ENCODE measurements at regions of chr15 and their contacts with region 1.

Region 1: DNA sequence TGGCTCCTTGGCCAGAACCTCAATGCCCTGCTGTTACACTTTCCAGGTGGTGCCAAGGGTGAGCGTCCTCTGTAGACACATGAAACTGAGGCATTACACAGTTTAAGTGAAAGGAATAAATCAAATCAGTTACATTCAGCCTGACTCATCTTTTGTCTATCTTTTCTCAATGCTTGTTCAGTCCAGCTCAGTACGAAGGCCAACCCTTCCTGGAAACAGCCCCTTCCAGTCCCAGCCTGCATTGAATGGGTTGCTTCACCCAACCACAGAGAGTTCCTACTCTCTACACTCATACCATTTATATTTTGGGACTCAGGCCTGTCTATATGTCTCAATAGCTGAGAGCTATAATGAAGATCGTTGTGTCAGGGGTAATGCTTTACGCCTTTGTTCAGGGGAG is 363.6 kb downstream of the RORA start:
- DNase-seq: no peak
- ATAC-seq: no peak
- H3K4me3 ChIP-seq: no peak overlapping the region
- H3K4me3 Mint-ChIP-seq: no peak overlapping the region
- H3K27ac ChIP-seq: no peak overlapping the region
- H3K27ac Mint-ChIP-seq: no peak overlapping the region
- H3K4me1 ChIP-seq: peaks cover 7% of the 10 kb centered on the region
- H3K4me1 Mint-ChIP-seq: peaks cover 26% of the 10 kb centered on the region
- H3K27me3 ChIP-seq: no peaks in the 10 kb centered on the region
- H3K27me3 Mint-ChIP-seq: no peaks in the 10 kb centered on the region
- CTCF ChIP-seq: no peak

Region 2: DNA sequence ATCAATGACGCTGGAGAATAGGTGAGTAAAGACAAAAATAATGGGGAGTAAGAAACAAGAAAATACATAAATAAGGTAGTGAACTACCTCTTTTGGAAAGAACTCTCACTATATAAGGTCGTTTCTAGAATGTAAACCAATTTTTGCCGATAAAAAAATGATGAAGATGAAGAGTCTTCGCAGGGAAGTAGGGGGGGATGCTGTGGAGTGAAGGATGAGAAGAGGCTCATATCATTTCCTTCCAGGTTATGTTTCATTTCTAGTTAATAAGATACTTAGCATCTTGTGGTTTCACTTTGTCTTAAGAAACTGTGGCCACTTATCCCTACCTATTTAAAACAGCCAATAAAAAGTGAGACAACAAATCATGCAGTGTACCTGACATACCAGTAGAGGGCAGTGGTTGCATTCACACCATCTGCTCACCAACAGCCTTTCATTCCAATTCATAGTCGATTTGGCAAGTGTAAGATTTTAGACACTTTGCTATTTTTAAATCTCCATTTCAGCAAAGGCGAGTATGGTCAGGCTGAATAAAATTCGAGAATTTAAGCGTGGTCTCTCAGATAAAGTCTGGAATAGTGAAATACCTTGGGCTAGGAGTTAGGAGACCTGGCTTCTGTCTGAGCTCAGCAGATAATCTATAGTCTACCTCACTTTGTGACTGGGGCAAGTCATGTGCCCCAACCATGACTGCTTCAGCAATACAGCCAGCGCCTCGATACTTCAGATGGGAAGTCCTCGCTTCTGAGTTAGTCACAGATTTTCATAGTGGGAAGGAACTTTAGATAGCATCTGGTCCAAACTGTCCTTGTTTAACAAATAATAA is 357.7 kb before region 1 on chr15:
- CTCF ChIA-PET with region 1: interaction called, 31 read pairs
- POLR2A ChIA-PET with region 1: no interaction called
- intact Hi-C with region 1: loop called (anchors 1 to 2 kb)
- DNase-seq: peak in 8 of 9 experiments; percentile 18 to 89 (median 52)
- ATAC-seq: peak; percentile 83
- H3K4me3 ChIP-seq: no peak overlapping the region
- H3K4me3 Mint-ChIP-seq: no peak overlapping the region
- H3K27ac ChIP-seq: peak overlapping the region in 1 of 2 experiments; percentile 52
- H3K27ac Mint-ChIP-seq: peak overlapping the region; percentile 47
- H3K4me1 ChIP-seq: peaks cover 33% of the 10 kb centered on the region
- H3K4me1 Mint-ChIP-seq: peaks cover 52% of the 10 kb centered on the region
- H3K27me3 ChIP-seq: no peaks in the 10 kb centered on the region
- H3K27me3 Mint-ChIP-seq: no peaks in the 10 kb centered on the region
- CTCF ChIP-seq: peak; percentile 86

Region 3: GRCh38 chr15:60592371-60593169 is 272.9 kb before region 1 on chr15:
- CTCF ChIA-PET with region 1: interaction called, 71 read pairs
- POLR2A ChIA-PET with region 1: no interaction called
- intact Hi-C with region 1: loop called in 1 of 2 experiments (anchors 2 kb)
- DNase-seq: peak; percentile 71 to 93 (median 87)
- ATAC-seq: peak; percentile 88
- H3K4me3 ChIP-seq: peak overlapping the region; percentile 71 to 81
- H3K4me3 Mint-ChIP-seq: peak overlapping the region; percentile 84
- H3K27ac ChIP-seq: peak overlapping the region; percentile 75 to 83
- H3K27ac Mint-ChIP-seq: peak overlapping the region; percentile 88
- H3K4me1 ChIP-seq: peaks cover 33% of the 10 kb centered on the region
- H3K4me1 Mint-ChIP-seq: peaks cover 35% of the 10 kb centered on the region
- H3K27me3 ChIP-seq: no peaks in the 10 kb centered on the region
- H3K27me3 Mint-ChIP-seq: no peaks in the 10 kb centered on the region
- CTCF ChIP-seq: no peak

Region 4: GRCh38 chr15:60633426-60633968 is 232.0 kb before region 1 on chr15:
- CTCF ChIA-PET with region 1: no interaction called
- POLR2A ChIA-PET with region 1: no interaction called
- intact Hi-C with region 1: no loop called
- DNase-seq: no peak
- ATAC-seq: no peak
- H3K4me3 ChIP-seq: no peak overlapping the region
- H3K4me3 Mint-ChIP-seq: no peak overlapping the region
- H3K27ac ChIP-seq: no peak overlapping the region
- H3K27ac Mint-ChIP-seq: no peak overlapping the region
- H3K4me1 ChIP-seq: no peaks in the 10 kb centered on the region
- H3K4me1 Mint-ChIP-seq: peaks cover 12% of the 10 kb centered on the region
- H3K27me3 ChIP-seq: no peaks in the 10 kb centered on the region
- H3K27me3 Mint-ChIP-seq: no peaks in the 10 kb centered on the region
- CTCF ChIP-seq: no peak

Region 5: DNA sequence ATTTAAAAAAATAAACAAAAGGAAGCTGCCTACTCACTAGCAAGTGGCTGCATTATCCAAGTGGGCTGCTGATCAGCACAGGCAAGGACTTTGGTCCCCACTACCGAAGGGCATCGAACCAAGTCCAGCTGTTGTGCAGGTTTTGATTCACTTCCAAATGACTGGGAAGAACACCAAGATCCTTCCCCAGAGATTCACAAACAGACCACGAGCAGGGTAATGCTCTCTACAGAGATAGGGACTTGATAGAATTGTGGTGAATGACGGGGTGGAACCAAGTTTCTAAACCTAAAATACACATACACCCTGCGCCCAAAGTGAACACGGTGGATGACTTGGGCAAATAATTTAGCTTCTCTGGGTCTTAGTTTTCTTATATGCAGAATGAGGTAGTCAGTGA is 182.9 kb before region 1 on chr15:
- CTCF ChIA-PET with region 1: no interaction called
- POLR2A ChIA-PET with region 1: no interaction called
- intact Hi-C with region 1: no loop called
- DNase-seq: no peak
- ATAC-seq: no peak
- H3K4me3 ChIP-seq: no peak overlapping the region
- H3K4me3 Mint-ChIP-seq: no peak overlapping the region
- H3K27ac ChIP-seq: no peak overlapping the region
- H3K27ac Mint-ChIP-seq: no peak overlapping the region
- H3K4me1 ChIP-seq: no peaks in the 10 kb centered on the region
- H3K4me1 Mint-ChIP-seq: no peaks in the 10 kb centered on the region
- H3K27me3 ChIP-seq: no peaks in the 10 kb centered on the region
- H3K27me3 Mint-ChIP-seq: no peaks in the 10 kb centered on the region
- CTCF ChIP-seq: no peak

Region 6: GRCh38 chr15:60787837-60788691 is 77.4 kb before region 1 on chr15:
- CTCF ChIA-PET with region 1: interaction called, 19 read pairs
- POLR2A ChIA-PET with region 1: no interaction called
- intact Hi-C with region 1: no loop called
- DNase-seq: peak in 6 of 9 experiments; percentile 27 to 53 (median 42)
- ATAC-seq: peak; percentile 76
- H3K4me3 ChIP-seq: no peak overlapping the region
- H3K4me3 Mint-ChIP-seq: peak overlapping the region; percentile 13
- H3K27ac ChIP-seq: no peak overlapping the region
- H3K27ac Mint-ChIP-seq: peak overlapping the region; percentile 74
- H3K4me1 ChIP-seq: peaks cover 5% of the 10 kb centered on the region
- H3K4me1 Mint-ChIP-seq: peaks cover 14% of the 10 kb centered on the region
- H3K27me3 ChIP-seq: no peaks in the 10 kb centered on the region
- H3K27me3 Mint-ChIP-seq: no peaks in the 10 kb centered on the region
- CTCF ChIP-seq: peak; percentile 50

Region 7: GRCh38 chr15:60840306-60840702 is 25.2 kb before region 1 on chr15:
- CTCF ChIA-PET with region 1: interaction called, 19 read pairs
- POLR2A ChIA-PET with region 1: interaction called, 3 read pairs
- intact Hi-C with region 1: loop called in 1 of 2 experiments (anchors 2 kb)
- DNase-seq: peak in 4 of 9 experiments; percentile 4 to 55 (median 28)
- ATAC-seq: no peak
- H3K4me3 ChIP-seq: peak overlapping the region; percentile 43
- H3K4me3 Mint-ChIP-seq: peak overlapping the region; percentile 86
- H3K27ac ChIP-seq: peak overlapping the region; percentile 51 to 84
- H3K27ac Mint-ChIP-seq: peak overlapping the region; percentile 96
- H3K4me1 ChIP-seq: peaks cover 60% of the 10 kb centered on the region
- H3K4me1 Mint-ChIP-seq: peaks cover 82% of the 10 kb centered on the region
- H3K27me3 ChIP-seq: no peaks in the 10 kb centered on the region
- H3K27me3 Mint-ChIP-seq: no peaks in the 10 kb centered on the region
- CTCF ChIP-seq: no peak

Region 8: DNA sequence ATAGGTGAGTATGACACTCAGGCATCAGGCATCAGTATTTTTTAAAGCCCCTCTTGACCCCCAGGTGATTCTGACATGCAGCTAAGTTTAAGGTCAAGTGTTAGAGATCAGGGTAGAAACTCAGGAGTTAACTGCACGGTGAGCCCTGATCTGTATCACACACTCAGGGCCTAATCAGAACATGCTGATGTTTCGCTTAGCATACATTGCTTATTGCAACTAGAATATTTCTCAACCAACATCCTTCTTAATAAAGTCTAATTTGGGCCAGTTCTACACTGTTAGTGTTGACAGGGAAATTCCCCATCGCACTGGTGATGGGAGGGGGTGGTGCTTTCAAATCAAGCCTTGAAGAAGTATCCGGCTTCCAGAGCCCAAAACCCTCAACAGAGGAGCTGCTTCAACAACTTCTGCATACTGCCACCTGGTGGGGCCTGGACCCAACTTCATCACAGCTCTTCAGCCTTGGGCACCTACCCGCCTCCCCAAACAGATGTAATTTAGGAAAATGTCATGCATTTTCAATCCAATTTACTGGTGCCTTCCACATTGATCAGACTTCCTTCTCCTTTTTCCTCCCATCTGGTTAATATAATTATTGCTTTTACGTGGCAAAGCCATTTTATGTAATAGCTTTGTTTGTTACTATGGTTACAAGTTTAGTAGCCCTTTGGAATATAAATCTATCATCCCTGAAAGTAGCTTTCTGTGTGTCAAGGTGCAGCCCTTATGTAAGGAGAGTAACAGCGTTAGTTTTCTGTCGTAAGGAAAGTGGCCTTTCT is 51.4 kb after region 1 on chr15:
- CTCF ChIA-PET with region 1: interaction called, 15 read pairs
- POLR2A ChIA-PET with region 1: no interaction called
- intact Hi-C with region 1: no loop called
- DNase-seq: peak; percentile 70 to 95 (median 88)
- ATAC-seq: peak; percentile 99
- H3K4me3 ChIP-seq: no peak overlapping the region
- H3K4me3 Mint-ChIP-seq: no peak overlapping the region
- H3K27ac ChIP-seq: peak overlapping the region in 1 of 2 experiments; percentile 31
- H3K27ac Mint-ChIP-seq: peak overlapping the region; percentile 72
- H3K4me1 ChIP-seq: peaks cover 8% of the 10 kb centered on the region
- H3K4me1 Mint-ChIP-seq: peaks cover 11% of the 10 kb centered on the region
- H3K27me3 ChIP-seq: no peaks in the 10 kb centered on the region
- H3K27me3 Mint-ChIP-seq: no peaks in the 10 kb centered on the region
- CTCF ChIP-seq: peak; percentile 92